ENCODE measurements at regions of chr15 and their contacts with region 1.

Region 1: GRCh38 chr15:59492389-59493377 is 54.7 kb downstream of the FAM81A start:
- DNase-seq: peak; percentile 46 to 64
- ATAC-seq: peak; percentile 94 to 100 (median 98)
- H3K4me3 ChIP-seq: peak overlapping the region; percentile 17
- H3K27ac ChIP-seq: no peak overlapping the region
- H3K4me1 ChIP-seq: no peaks in the 10 kb centered on the region
- H3K27me3 ChIP-seq: no peaks in the 10 kb centered on the region
- CTCF ChIP-seq: peak; percentile 83

Region 2: GRCh38 chr15:58980351-58980939 is 512.2 kb before region 1 on chr15:
- intact Hi-C with region 1: loop called (anchors 2 to 5 kb)
- DNase-seq: no peak
- ATAC-seq: peak in 1 of 4 donors; percentile 81
- H3K4me3 ChIP-seq: no peak overlapping the region
- H3K27ac ChIP-seq: no peak overlapping the region
- H3K4me1 ChIP-seq: peaks cover 4% of the 10 kb centered on the region
- H3K27me3 ChIP-seq: no peaks in the 10 kb centered on the region
- CTCF ChIP-seq: peak; percentile 63

Region 3: DNA sequence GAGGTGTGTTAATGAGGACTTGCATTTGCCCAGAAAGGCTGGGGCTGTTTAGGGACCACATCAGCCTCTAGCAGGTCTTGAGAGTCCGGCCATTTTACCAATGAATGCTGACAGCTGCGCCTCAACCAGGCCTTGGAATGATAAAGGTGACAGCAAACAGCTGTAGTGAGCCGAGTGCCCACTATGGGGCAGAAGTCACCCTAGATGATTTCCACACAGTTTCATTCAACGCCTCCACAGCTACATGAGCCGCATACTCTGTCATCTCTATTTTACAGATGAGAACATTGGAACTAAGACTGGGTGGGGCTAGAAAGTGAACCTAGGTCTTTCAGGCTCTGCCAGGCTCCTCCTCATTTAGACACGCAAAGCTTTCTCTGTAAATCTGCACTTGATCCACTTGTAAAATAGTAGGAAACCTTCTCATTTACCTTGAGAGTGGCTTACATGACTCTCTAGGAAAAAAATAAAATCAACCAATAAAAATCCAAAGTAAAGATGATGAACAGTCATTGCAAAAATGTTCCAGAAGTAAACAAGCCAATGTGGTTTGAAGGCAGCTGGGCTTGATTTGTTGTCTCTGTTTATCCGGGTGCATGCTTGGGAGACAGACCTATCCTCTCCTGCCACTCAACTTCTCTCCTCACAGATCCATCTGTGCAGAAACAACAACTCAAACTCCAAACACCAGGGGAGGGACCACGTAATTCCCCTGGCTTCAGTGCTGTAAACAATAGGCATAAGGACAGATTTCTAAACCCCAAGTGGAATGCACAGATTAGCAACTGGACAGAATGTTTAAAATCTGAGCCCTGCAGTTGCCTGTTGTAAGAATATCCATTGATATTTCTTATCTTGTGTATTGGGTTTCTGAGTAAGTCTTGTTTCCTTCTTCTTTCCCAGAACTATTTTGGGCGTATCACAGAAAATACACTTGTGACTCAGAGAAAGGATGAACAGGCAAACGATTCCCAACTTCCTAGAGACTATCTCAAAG is 317.6 kb before region 1 on chr15:
- intact Hi-C with region 1: loop called (anchors 5 to 10 kb)
- DNase-seq: peak; percentile 42 to 56
- ATAC-seq: peak; percentile 75 to 87 (median 82)
- H3K4me3 ChIP-seq: no peak overlapping the region
- H3K27ac ChIP-seq: peak overlapping the region; percentile 6
- H3K4me1 ChIP-seq: peaks cover 16% of the 10 kb centered on the region
- H3K27me3 ChIP-seq: no peaks in the 10 kb centered on the region
- CTCF ChIP-seq: peak; percentile 54

Region 4: GRCh38 chr15:59247364-59247763 is 245.3 kb before region 1 on chr15:
- intact Hi-C with region 1: loop called (anchors 2 to 5 kb)
- DNase-seq: peak in 1 of 2 donors; percentile 54
- ATAC-seq: peak; percentile 51 to 74 (median 68)
- H3K4me3 ChIP-seq: no peak overlapping the region
- H3K27ac ChIP-seq: no peak overlapping the region
- H3K4me1 ChIP-seq: no peaks in the 10 kb centered on the region
- H3K27me3 ChIP-seq: no peaks in the 10 kb centered on the region
- CTCF ChIP-seq: peak; percentile 61

Measured in psoas muscle (tissue), 8 donors.